ENCODE measurements at regions of chr20 and their contacts with region 1.

Region 1: GRCh38 chr20:35954200-35954906 is at the start of gene SCAND1:
- DNase-seq: peak; percentile 94
- ATAC-seq: peak; percentile 86
- H3K4me3 Mint-ChIP-seq: peak within 1 kb of the TSS; percentile 100
- H3K27ac Mint-ChIP-seq: peak within 1 kb of the TSS; percentile 100
- H3K4me1 Mint-ChIP-seq: peaks cover 22% of the 10 kb centered on the region
- H3K27me3 Mint-ChIP-seq: no peaks in the 10 kb centered on the region
- CTCF ChIP-seq: peak; percentile 48
- total RNA-seq, gene SCAND1: 35.9 and 43.2 TPM in 2 replicates

Region 2: DNA sequence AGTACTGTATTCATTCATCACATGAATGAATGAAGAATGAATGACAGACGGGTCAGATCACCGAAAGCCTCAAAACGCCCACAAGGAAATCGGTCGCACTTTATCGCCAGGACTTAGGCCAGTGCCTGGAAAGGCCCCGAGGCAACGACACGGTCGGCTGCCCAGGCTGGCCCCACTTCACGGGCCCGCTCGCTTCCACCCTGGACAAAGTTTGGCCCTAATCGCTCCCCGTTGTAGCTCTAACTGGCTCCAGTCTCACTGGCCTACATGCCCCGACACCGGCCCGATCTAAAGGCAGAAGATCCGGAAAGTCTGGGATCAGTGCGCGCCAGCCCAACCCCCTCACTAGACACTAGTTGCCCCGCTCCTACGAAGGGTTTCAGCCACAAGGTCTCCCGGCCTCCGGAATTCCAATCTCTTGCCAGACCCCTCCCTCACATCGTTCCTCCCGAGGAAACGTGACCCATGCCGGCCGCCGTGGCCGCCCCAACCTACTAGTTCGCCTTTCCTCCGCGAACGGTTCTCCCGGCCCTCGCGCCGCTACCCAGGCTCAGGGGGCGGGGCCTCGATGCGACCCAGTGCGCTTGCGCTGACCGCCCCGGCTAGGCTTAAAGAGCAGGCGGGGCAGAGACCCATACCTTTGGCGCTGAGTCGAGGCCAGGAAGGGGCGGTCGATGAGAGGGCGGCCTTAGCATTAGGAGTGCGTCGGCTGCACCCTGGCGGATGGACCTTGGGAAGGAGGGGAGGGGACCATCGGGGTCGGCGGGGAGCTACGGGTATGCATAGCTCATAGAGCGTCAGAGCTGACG is 998.9 kb before region 1 on chr20 and contains the starts of genes GSS and MYH7B:
- CTCF ChIA-PET with region 1: no interaction called
- POLR2A ChIA-PET with region 1: no interaction called
- intact Hi-C with region 1: loop called (anchors 10 kb)
- DNase-seq: peak; percentile 98
- ATAC-seq: peak; percentile 95
- H3K4me3 Mint-ChIP-seq: peak within 1 kb of the TSS; percentile 97
- H3K27ac Mint-ChIP-seq: peak within 1 kb of the TSS; percentile 83
- H3K4me1 Mint-ChIP-seq: peaks cover 26% of the 10 kb centered on the region
- H3K27me3 Mint-ChIP-seq: no peaks in the 10 kb centered on the region
- CTCF ChIP-seq: no peak
- total RNA-seq, gene GSS: 26.1 and 27.5 TPM in 2 replicates
- total RNA-seq, gene MYH7B: 0.20 and 0.35 TPM in 2 replicates

Region 3: DNA sequence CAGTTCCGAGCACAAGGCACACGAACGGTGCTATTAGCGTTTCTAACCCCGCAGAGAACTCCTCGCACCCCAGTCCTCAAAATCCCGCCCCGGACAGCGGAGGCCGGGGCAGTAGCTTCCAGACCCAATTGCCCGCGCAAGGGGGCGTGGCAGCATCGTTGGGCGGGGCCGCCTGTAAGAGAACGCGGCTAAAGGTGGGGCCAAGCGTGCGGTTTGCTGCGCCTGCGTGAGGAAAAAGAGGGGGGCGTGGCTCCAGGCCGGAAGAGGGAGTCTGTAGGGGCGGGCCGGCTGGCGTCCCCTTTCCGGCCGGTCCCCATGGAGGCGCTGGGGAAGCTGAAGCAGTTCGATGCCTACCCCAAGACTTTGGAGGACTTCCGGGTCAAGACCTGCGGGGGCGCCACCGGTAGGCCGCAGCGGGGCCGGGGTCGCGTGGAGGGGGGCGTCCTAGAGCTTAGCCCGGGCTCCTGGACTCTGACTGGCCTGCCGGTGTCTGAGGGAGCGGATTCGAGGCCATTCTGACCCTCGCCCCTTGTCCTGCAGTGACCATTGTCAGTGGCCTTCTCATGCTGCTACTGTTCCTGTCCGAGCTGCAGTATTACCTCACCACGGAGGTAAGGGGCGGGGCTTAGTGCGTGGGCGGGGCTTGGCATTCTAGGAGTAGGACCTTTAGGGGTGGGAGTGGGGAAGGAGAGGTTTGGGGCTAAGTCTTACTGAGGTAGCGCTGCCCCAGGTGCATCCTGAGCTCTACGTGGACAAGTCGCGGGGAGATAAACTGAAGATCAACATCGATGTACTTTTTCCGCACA is 412.4 kb before region 1 on chr20 and contains the start of gene ERGIC3:
- CTCF ChIA-PET with region 1: no interaction called
- POLR2A ChIA-PET with region 1: interaction called, 11 read pairs
- intact Hi-C with region 1: loop called (anchors 1 kb)
- DNase-seq: peak; percentile 97
- ATAC-seq: peak; percentile 92
- H3K4me3 Mint-ChIP-seq: peak within 1 kb of the TSS; percentile 92
- H3K27ac Mint-ChIP-seq: peak within 1 kb of the TSS; percentile 77
- H3K4me1 Mint-ChIP-seq: peaks cover 21% of the 10 kb centered on the region
- H3K27me3 Mint-ChIP-seq: no peaks in the 10 kb centered on the region
- CTCF ChIP-seq: no peak
- total RNA-seq, gene ERGIC3: 159 and 183 TPM in 2 replicates

Region 4: DNA sequence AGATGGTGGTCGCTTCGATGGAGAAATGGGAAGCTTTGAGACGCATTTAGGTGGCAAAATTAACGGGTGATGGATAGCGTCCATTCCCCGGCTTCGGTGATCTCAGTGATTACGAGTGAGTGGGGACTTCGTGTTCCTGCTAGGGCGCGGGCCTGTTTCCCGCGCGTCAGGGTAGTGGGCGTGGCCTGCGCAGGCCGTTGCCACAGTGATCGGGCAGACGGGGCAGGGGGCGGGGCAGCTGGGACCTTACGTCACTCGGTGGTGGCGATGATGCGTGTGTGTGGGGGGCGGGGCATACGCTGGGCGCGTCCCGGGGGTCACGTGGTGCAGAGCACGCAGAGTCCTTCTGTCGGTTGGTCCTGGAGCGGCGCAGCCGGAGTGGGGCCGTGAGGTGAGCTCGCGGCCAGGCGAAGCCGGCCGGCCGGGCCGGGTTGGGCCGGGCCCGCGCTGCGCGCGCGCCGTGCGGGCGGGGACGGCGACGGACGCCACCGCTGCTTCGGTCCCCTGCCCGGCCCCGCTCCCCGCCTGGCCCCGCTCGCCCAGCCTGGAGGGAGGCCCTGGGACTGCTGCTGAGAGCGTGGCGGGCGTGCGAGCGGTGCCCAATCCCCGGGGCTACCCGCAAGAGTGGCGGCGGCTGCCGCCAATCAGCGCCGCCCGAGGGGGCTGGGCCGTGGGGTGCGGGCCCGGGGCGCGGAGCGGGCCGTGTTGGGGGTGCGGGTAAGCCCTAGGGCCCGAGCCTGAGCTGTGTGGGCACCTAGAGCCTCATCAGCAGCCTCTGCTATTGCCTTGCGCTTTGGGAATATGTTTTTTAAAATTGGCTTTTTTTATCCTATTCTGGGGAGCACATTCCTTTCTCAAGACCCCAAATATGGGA is 182.4 kb before region 1 on chr20 and contains the start of gene PHF20:
- CTCF ChIA-PET with region 1: interaction called, 3 read pairs
- POLR2A ChIA-PET with region 1: interaction called, 14 read pairs
- intact Hi-C with region 1: loop called (anchors 1 kb)
- DNase-seq: peak; percentile 98
- ATAC-seq: peak; percentile 85
- H3K4me3 Mint-ChIP-seq: peak within 1 kb of the TSS; percentile 86
- H3K27ac Mint-ChIP-seq: peak within 1 kb of the TSS; percentile 95
- H3K4me1 Mint-ChIP-seq: peaks cover 79% of the 10 kb centered on the region
- H3K27me3 Mint-ChIP-seq: no peaks in the 10 kb centered on the region
- CTCF ChIP-seq: no peak
- total RNA-seq, gene PHF20: 72.3 and 86.0 TPM in 2 replicates

Region 5: GRCh38 chr20:36064658-36065426 is 110.5 kb after region 1 on chr20:
- CTCF ChIA-PET with region 1: no interaction called
- POLR2A ChIA-PET with region 1: interaction called, 11 read pairs
- intact Hi-C with region 1: no loop called
- DNase-seq: peak; percentile 99
- ATAC-seq: peak; percentile 96
- H3K4me3 Mint-ChIP-seq: peak overlapping the region; percentile 90
- H3K27ac Mint-ChIP-seq: peak overlapping the region; percentile 78
- H3K4me1 Mint-ChIP-seq: peaks cover 5% of the 10 kb centered on the region
- H3K27me3 Mint-ChIP-seq: peaks cover 3% of the 10 kb centered on the region
- CTCF ChIP-seq: no peak

Region 6: DNA sequence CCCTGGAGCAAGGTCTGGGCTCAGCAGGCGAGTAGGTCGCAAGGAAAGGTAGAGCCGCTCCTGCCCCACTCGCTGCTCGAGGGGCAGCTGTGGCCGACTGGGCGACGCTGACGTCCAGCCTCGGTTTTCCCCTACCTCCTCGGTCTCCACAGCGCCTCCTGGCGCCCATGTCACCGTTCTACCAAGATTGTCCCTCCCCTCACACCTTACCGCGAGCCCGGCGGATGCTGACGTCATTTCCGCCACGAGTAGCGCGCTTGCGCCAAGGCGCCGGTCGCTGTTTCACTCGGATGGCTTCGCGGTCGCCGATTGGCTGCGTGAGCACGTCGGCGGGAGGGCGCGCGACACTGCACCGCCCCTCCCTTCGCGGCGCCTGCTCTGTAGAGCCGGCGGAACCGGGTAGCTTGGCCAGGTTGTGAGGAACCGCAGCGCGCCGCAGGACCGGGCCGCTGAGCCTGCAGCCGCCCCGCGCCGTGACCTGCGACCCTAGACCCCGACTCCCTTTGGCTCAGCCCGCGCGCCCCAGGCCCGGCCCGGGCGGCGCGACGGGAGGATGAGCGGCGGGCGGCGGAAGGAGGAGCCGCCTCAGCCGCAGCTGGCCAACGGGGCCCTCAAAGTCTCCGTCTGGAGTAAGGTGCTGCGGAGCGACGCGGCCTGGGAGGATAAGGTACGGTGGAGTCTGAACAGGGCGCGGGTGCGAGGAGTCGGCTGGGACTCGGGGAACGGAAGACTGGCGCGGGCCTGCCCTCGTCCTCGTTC is 651.2 kb after region 1 on chr20 and contains the start of gene RAB5IF:
- CTCF ChIA-PET with region 1: no interaction called
- POLR2A ChIA-PET with region 1: interaction called, 4 read pairs
- intact Hi-C with region 1: loop called (anchors 10 kb)
- DNase-seq: peak; percentile 99
- ATAC-seq: peak; percentile 83
- H3K4me3 Mint-ChIP-seq: peak within 1 kb of the TSS; percentile 97
- H3K27ac Mint-ChIP-seq: peak within 1 kb of the TSS; percentile 99
- H3K4me1 Mint-ChIP-seq: peaks cover 53% of the 10 kb centered on the region
- H3K27me3 Mint-ChIP-seq: no peaks in the 10 kb centered on the region
- CTCF ChIP-seq: peak; percentile 58
- total RNA-seq, gene RAB5IF: 54.9 and 55.7 TPM in 2 replicates